SK-N-SH (cell line): ENCODE measurements at regions of chr5 and their contacts with region 1.

Region 1: DNA sequence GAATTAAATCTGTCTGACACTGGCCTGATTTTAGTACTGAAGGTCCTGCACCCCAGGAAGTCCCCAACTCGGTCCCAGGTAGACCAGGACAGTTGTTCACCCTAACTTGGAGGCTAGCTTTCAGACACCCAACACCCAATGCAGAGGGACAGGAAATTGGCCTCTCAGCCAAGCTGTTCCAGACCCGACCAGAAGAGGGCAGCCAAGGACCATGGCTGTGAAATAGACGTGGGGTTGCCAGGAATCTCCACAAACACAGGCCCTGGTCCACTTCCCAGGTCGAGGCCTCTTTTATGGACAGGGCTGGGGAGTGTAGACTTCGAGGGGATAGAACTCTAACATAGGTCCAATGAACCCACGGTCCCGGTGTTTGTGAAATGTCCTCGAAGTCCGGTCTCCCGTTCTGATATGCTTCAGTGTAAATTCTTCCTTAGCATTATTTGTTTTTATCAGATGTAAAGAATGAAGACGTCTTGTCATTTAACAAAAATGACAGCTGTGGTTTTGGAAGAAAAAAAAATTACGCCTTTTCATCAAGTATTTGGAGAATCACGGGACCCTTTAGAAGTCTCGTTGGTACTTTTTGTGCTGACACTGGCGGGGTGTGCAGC is 260.3 kb upstream of the ADAMTS16 start:
- DNase-seq: peak; percentile 87
- H3K4me3 ChIP-seq: no peak overlapping the region; a peak in 1 of 4 replicates
- H3K27ac ChIP-seq: no peak overlapping the region
- H3K4me1 ChIP-seq: no peaks in the 10 kb centered on the region; a peak in 1 of 4 replicates
- H3K27me3 ChIP-seq: no peaks in the 10 kb centered on the region
- CTCF ChIP-seq: peak; percentile 95
- EP300 ChIP-seq: no peak
- RAD21 ChIP-seq: peak; percentile 96

Region 2: DNA sequence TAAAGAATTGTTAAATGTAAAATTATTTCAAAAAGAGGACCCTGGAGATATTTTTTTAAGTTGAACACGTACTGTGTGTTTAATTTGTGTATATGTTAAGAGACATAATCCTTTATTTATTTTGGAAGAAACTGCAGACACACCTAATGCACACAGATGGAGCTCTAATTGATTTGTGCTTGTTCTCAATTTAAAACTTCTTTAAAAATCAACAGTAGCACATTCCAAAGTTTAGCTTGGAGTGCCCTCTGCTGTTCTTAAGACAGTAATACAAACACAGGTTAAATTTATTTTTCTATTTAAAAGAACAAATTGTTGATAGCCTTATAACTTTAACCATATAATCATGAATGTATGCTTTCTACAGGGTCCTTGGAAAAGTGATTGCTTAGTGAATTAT is 17.3 kb before region 1 on chr5:
- CTCF ChIA-PET with region 1: interaction called, 16 read pairs
- POLR2A ChIA-PET with region 1: no interaction called
- DNase-seq: peak; percentile 41
- H3K4me3 ChIP-seq: no peak overlapping the region
- H3K27ac ChIP-seq: no peak overlapping the region
- H3K4me1 ChIP-seq: no peaks in the 10 kb centered on the region
- H3K27me3 ChIP-seq: peaks cover 12% of the 10 kb centered on the region; the same call in 1 of the 2 replicates
- CTCF ChIP-seq: peak; percentile 84
- EP300 ChIP-seq: no peak
- RAD21 ChIP-seq: peak; percentile 81

Region 3: GRCh38 chr5:4893063-4893744 is 13.4 kb after region 1 on chr5:
- CTCF ChIA-PET with region 1: interaction called, 10 read pairs
- POLR2A ChIA-PET with region 1: no interaction called
- DNase-seq: no peak
- H3K4me3 ChIP-seq: no peak overlapping the region
- H3K27ac ChIP-seq: no peak overlapping the region
- H3K4me1 ChIP-seq: no peaks in the 10 kb centered on the region; a peak in 1 of 4 replicates
- H3K27me3 ChIP-seq: no peaks in the 10 kb centered on the region
- CTCF ChIP-seq: no peak
- EP300 ChIP-seq: no peak
- RAD21 ChIP-seq: no peak

Region 4: DNA sequence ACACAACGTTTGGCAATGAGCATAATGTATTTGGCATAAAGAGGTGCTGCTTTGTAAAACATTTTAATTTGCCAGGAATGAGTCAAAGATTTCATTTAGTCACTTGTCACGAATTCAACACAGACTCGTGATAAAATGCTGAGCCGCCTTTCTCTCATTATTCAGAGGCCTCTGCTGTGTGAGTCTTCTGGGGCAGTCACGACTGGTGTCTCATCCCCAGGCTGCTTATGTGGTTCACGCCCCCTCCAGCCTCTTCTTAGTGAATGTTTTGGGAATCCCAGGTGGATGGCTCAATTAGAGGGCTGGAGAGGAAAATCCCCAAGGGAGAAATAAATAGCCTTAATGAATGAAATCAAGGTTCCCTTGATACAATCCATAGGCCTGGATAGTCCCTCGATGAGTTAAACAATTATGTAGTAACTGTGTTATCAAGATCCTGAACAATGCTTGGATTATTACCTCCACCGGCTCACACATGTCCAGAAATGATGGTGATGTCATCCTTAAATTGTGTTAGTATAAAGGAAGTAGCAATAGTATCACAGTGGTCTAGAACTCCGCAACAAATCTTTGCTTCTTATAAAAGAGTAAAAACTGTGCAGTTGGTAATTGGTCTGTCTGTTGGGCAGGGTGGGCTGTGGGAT is 68.2 kb after region 1 on chr5:
- CTCF ChIA-PET with region 1: interaction called, 71 read pairs
- POLR2A ChIA-PET with region 1: no interaction called
- DNase-seq: no peak
- H3K4me3 ChIP-seq: no peak overlapping the region
- H3K27ac ChIP-seq: no peak overlapping the region
- H3K4me1 ChIP-seq: no peaks in the 10 kb centered on the region; a peak in 1 of 4 replicates
- H3K27me3 ChIP-seq: no peaks in the 10 kb centered on the region
- CTCF ChIP-seq: no peak
- EP300 ChIP-seq: no peak
- RAD21 ChIP-seq: no peak

Region 5: DNA sequence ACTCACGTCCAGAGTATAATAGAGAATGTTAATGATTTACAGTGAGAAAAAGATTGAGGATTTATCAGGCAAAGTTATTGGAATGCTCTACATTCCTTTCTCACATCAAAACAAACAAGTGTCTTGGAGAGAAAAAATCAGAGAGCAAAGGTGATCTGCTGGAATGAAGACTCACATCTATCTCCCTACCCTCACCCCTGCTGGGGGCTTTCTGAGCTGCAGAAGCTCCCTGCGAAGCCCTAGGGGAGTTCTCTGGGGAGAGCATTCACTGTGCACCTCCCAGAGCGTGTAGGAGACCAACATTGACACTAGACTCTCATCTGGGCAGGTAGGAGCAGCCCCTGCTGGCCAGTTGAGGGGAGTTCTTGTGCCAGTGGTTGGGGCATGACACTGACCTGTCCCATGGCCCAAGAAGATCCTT is 183.7 kb after region 1 on chr5:
- CTCF ChIA-PET with region 1: interaction called, 13 read pairs
- POLR2A ChIA-PET with region 1: no interaction called
- DNase-seq: peak; percentile 25
- H3K4me3 ChIP-seq: no peak overlapping the region
- H3K27ac ChIP-seq: no peak overlapping the region
- H3K4me1 ChIP-seq: no peaks in the 10 kb centered on the region
- H3K27me3 ChIP-seq: peaks cover 6% of the 10 kb centered on the region; the same call in 1 of the 2 replicates
- CTCF ChIP-seq: peak; percentile 25; the same call in 1 of the 2 replicates
- EP300 ChIP-seq: no peak
- RAD21 ChIP-seq: no peak

Region 6: GRCh38 chr5:5141625-5142532 is 262.1 kb after region 1 on chr5:
- CTCF ChIA-PET with region 1: interaction called, 24 read pairs
- POLR2A ChIA-PET with region 1: no interaction called
- DNase-seq: peak; percentile 53
- H3K4me3 ChIP-seq: peak overlapping the region in 1 of 2 experiments; percentile 28; a peak in 1 of 4 replicates
- H3K27ac ChIP-seq: no peak overlapping the region
- H3K4me1 ChIP-seq: peaks cover 0 to 3% of the 10 kb centered on the region in 2 experiments; a peak in 1 of 4 replicates
- H3K27me3 ChIP-seq: peaks cover 26% of the 10 kb centered on the region
- CTCF ChIP-seq: peak; percentile 84
- EP300 ChIP-seq: no peak
- RAD21 ChIP-seq: peak; percentile 85

Region 7: DNA sequence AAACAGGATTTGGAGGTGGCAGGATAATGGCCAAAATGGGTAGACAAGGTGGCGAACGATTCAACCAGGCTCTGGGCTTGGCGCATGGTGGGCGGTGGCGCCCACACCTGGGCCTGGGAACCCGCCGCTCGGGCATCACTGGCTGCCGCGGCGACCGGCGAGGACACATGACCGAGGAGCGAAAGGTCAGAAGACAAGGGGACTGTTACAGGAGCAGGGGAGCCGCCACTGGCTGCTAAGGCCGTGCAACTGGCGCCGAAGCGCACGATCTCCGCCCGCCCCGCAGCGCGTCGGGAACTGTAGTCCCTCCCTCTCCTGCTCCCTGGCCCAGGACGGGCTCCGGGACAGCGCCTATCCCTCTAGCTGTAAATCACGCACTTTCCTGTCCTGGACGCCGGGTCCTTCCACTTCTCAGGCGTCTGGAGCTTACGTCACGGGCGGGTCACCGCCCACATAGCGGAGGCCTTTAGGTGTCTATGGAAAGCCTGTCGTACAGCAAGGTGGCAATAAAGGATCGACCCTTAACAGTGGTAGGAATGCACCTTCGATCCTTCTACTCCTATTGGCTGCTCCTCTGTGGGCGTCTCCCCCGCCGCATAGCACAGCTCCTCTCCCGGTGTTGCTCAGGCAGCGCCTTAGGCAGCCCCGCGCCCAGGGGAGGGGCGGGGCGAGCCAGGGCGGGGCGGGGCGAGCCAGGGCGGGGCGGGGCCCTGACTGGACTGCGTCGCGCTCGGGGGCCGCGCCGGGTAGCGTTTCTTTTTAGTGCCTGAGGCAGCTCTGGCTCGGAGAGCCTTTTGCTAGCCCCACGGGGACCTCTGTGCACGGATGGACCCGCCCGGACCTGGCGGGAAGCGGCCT is 542.4 kb after region 1 on chr5 and contains the start of gene ICE1:
- CTCF ChIA-PET with region 1: interaction called, 105 read pairs
- POLR2A ChIA-PET with region 1: no interaction called
- DNase-seq: peak; percentile 97
- H3K4me3 ChIP-seq: peak within 1 kb of the TSS; percentile 94 to 99
- H3K27ac ChIP-seq: peak within 1 kb of the TSS; percentile 95 to 98
- H3K4me1 ChIP-seq: peaks cover 18 to 23% of the 10 kb centered on the region in 2 experiments
- H3K27me3 ChIP-seq: no peaks in the 10 kb centered on the region
- CTCF ChIP-seq: no peak
- EP300 ChIP-seq: no peak; a peak in 1 of 4 replicates
- RAD21 ChIP-seq: no peak
- polyA plus RNA-seq, gene ICE1: 9.4 and 10.7 TPM in 2 replicates